Mammary epithelial cell (primary cell): ENCODE measurements at regions of chr5 and their contacts with region 1.

Region 1: GRCh38 chr5:154405078-154405792 is 40.6 kb upstream of the SAP30L start:
- DNase-seq: peak; percentile 50
- H3K4me3 ChIP-seq: peak overlapping the region; percentile 15 to 35 (median 22)
- H3K27ac ChIP-seq: no peak overlapping the region
- H3K4me1 ChIP-seq: peaks cover 20% of the 10 kb centered on the region
- H3K27me3 ChIP-seq: no peaks in the 10 kb centered on the region
- CTCF ChIP-seq: peak; percentile 63 to 89

Region 2: GRCh38 chr5:153981905-153982605 is 423.2 kb before region 1 on chr5:
- CTCF ChIA-PET with region 1: no interaction called
- dilution Hi-C with region 1: no loop called
- in situ Hi-C with region 1: loop called in 1 of 2 experiments (anchors 10 kb)
- intact Hi-C with region 1: no loop called
- DNase-seq: peak; percentile 58
- H3K4me3 ChIP-seq: no peak overlapping the region
- H3K27ac ChIP-seq: no peak overlapping the region
- H3K4me1 ChIP-seq: peaks cover 8% of the 10 kb centered on the region
- H3K27me3 ChIP-seq: no peaks in the 10 kb centered on the region
- CTCF ChIP-seq: no peak

Region 3: DNA sequence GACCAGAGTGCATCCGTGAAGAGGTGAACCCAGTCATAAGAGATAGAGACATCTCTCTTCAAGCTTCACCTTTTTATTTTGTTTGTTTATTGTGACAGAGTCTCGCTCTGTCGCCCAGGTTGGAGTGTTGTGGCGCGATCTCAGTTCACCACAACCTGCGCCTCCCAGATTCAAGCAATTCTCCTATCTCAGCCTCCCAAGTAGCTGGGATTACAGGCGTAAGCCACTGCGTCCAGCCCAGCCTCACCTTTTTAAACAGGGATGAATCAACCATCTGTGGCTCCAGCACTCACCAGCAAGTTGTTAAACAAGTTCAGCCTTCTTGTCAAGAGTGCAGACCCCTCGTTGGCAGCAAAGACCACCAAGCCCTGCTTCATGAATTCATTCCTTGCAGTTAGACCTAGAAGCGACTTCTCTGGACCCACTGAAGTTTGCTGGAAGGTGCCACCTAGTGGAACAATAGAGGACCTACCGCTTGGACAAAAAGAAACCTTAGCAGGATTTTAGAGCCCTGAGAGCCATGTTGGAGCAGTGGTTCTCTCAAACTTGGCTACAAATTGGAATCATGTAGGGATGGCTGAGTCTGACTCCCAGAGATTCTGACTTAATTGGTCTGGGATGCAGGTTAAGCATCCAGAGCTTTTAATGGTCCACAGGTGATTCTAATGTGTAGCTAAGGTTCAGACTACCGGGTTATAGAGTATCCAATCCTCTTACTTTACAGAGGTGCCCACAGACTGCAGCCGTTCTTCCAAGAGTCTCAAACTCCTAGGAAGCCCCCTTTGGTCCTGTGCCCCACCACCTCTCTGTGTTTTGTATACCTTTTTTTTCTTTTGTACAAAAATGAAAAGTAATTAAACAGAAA is 225.2 kb before region 1 on chr5:
- CTCF ChIA-PET with region 1: no interaction called
- dilution Hi-C with region 1: no loop called
- in situ Hi-C with region 1: no loop called
- intact Hi-C with region 1: loop called (anchors 1 kb)
- DNase-seq: peak; percentile 30
- H3K4me3 ChIP-seq: no peak overlapping the region
- H3K27ac ChIP-seq: no peak overlapping the region
- H3K4me1 ChIP-seq: no peaks in the 10 kb centered on the region
- H3K27me3 ChIP-seq: peaks cover 9% of the 10 kb centered on the region
- CTCF ChIP-seq: peak; percentile 74 to 80

Region 4: DNA sequence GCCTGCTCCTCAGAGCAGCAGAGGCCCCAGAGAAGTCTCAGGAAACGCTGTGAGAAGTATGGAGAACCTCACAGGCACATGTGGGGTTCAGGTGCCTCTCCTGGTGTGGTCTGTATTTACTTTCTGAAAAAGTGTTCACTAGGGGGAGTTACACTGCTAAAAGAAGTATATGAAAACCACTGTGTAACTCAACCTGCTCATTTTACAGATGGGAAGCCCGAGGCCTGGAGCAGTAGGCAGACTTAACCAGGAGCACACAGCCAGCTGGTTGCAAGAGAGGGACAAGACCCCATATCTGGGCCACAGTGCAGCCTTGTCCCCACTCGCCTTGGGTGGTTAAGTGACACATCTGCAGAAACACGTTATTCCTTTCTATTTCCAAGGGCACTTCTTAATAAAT is 72.2 kb before region 1 on chr5:
- CTCF ChIA-PET with region 1: interaction called, 3 read pairs
- dilution Hi-C with region 1: no loop called
- in situ Hi-C with region 1: no loop called
- intact Hi-C with region 1: loop called (anchors 1 kb)
- DNase-seq: no peak
- H3K4me3 ChIP-seq: no peak overlapping the region
- H3K27ac ChIP-seq: no peak overlapping the region
- H3K4me1 ChIP-seq: no peaks in the 10 kb centered on the region
- H3K27me3 ChIP-seq: peaks cover 1% of the 10 kb centered on the region
- CTCF ChIP-seq: peak in 1 of 2 donors; percentile 7

Region 5: GRCh38 chr5:154513669-154514084 is 108.4 kb after region 1 on chr5:
- CTCF ChIA-PET with region 1: no interaction called
- dilution Hi-C with region 1: no loop called
- in situ Hi-C with region 1: no loop called
- intact Hi-C with region 1: no loop called
- DNase-seq: peak; percentile 58
- H3K4me3 ChIP-seq: no peak overlapping the region
- H3K27ac ChIP-seq: no peak overlapping the region
- H3K4me1 ChIP-seq: no peaks in the 10 kb centered on the region
- H3K27me3 ChIP-seq: peaks cover 4% of the 10 kb centered on the region
- CTCF ChIP-seq: no peak

Region 6: DNA sequence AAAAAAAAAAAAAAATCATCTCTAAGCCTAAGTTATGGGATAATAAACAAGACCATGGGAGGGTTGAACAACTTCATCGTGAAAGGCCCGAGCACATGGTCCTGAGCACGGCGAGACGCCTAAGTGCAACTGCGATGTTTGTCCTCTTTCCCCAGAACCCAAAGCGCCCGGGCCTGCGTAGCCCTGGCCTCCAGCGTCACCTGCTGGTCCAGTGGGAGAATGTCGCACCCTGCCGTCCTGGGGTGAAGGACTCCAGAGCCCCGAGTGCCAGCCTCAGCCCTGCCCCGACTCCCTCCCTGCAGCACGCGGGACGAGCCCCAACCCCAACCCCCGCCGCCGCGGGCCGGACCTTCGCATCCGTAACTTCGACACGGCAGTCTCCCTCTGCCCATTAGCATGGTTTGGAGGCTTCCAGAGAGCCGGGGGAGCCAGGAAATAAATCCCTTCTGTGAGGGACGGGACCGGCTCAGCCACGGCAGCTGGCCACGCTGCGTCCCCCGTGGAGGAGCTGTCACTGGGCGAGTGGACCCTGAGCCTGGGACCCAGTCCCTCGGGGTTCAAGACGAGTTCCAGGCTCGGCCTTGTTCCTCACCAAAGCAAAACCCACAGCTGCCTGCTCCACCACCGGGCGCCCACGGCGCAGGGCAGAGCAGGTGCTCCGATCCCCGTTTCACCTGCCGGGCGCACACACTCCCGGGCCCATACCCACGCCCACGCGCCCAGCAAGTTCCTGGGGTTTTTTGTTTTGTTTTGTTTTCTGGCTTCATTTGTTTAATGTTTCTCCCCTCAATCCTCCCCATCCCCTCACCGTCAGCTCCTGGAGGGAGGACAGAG is 205.3 kb after region 1 on chr5:
- CTCF ChIA-PET with region 1: no interaction called
- dilution Hi-C with region 1: no loop called
- in situ Hi-C with region 1: no loop called
- intact Hi-C with region 1: loop called (anchors 1 kb)
- DNase-seq: peak; percentile 56
- H3K4me3 ChIP-seq: peak overlapping the region in 2 of 3 experiments; percentile 43 to 46
- H3K27ac ChIP-seq: no peak overlapping the region
- H3K4me1 ChIP-seq: peaks cover 11% of the 10 kb centered on the region
- H3K27me3 ChIP-seq: no peaks in the 10 kb centered on the region
- CTCF ChIP-seq: peak; percentile 79 to 98